A549 (cell line): ENCODE measurements at regions of chr13 and their contacts with region 1.

Region 1: DNA sequence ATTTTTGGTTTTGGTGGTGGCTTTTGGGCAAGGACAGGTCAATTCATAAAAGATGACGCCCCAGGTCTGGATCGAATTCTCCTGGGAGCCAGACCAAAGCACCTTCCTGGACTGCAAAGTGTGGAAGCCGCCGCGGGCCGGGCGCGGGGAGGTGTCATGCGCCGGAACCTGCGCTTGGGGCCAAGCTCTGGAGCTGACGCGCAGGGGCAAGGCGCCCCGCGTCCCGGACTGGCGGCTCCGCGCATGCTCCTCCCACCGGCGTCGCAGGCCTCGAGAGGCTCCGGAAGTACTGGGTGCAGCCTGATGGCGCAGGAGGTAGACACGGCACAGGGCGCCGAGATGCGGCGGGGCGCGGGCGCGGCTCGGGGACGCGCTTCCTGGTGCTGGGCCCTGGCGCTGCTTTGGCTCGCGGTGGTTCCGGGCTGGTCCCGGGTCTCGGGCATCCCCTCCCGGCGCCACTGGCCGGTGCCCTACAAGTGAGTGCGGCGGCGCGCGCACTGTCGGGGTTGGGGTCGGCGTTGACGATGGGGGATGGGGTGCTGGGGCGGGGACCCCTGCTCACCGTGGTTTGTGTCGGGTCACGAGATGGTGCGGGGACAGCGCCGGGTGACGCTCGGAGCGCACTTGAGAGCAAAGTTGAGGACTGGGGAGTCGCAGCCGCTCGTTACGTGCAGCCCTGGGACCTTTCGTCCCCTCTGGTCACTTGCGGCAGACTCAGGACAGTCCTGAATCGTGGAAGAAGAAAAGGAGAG is at the start of gene CLN5:
- DNase-seq: peak; percentile 76 to 90
- ATAC-seq: peak; percentile 99
- H3K4me3 ChIP-seq: peak within 1 kb of the TSS; percentile 83
- H3K27ac ChIP-seq: peak within 1 kb of the TSS; percentile 90 to 96
- H3K4me1 ChIP-seq: peaks cover 8% of the 10 kb centered on the region; the same call in 1 of the 3 replicates
- CTCF ChIP-seq: no peak
- EP300 ChIP-seq: no peak
- POLR2A ChIP-seq: peak; percentile 79
- RAD21 ChIP-seq: no peak
- polyA plus RNA-seq, gene CLN5: 20.0 and 21.1 TPM in 2 replicates

Region 2: DNA sequence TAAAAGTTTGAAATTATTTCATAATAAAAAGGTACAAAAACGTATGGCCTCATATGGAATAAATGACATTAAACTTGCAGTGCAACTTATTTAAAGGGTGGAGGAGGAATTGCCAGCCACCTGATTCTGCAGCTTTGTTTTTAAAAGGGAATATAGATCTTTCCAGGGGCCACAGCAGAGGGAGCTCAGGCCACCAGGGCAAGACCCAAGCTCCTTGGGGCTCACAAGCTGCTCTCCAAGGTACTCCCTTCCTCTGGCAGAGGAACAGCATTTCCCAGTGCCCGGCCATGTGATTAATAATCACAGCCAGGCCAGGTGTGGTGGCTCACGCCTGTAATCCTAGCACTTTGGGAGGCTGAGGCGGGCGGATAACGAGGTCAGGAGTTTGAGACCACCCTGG is 37.4 kb before region 1 on chr13:
- CTCF ChIA-PET with region 1: no interaction called
- POLR2A ChIA-PET with region 1: no interaction called
- DNase-seq: no peak
- ATAC-seq: no peak
- H3K4me3 ChIP-seq: no peak overlapping the region
- H3K27ac ChIP-seq: no peak overlapping the region
- H3K4me1 ChIP-seq: no peaks in the 10 kb centered on the region
- CTCF ChIP-seq: no peak
- EP300 ChIP-seq: no peak
- POLR2A ChIP-seq: no peak
- RAD21 ChIP-seq: no peak

Region 3: GRCh38 chr13:76980075-76980718 is 11.8 kb before region 1 on chr13:
- CTCF ChIA-PET with region 1: interaction called, 14 read pairs
- POLR2A ChIA-PET with region 1: no interaction called
- DNase-seq: peak; percentile 59 to 85
- ATAC-seq: peak; percentile 99 to 100
- H3K4me3 ChIP-seq: peak overlapping the region; percentile 47
- H3K27ac ChIP-seq: peak overlapping the region in 1 of 2 experiments; percentile 62; a peak in 3 of 6 replicates
- H3K4me1 ChIP-seq: no peaks in the 10 kb centered on the region
- CTCF ChIP-seq: peak; percentile 73
- EP300 ChIP-seq: no peak
- POLR2A ChIP-seq: no peak
- RAD21 ChIP-seq: peak; percentile 55 to 65

Region 4: DNA sequence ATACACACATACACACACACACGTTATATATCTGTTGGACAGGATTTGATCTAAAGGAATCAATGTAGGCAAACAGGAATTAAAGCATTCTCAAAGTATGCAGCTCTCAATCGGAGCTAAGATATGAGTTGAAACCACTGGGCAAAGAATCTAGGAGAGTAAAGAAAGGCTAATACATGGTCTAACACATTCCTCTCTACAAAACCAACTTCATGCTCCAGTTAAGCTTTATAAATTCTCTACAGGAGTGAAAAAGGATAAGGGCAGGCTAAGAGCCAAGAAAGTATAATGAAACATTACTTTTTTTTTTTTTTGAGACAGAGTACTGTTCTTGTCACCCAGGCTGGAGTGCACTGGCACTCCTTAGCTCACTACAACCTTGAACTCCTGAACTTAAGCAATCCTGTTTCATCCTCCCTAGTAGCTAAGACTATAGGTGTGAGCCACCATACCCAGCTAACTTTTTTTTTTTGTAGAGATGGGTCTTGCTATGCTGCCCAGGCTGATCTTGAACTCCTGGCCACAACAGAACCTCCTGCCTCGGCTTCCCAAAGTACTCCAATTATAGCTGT is 24.4 kb after region 1 on chr13:
- CTCF ChIA-PET with region 1: no interaction called
- POLR2A ChIA-PET with region 1: no interaction called
- DNase-seq: no peak
- ATAC-seq: no peak
- H3K4me3 ChIP-seq: no peak overlapping the region
- H3K27ac ChIP-seq: no peak overlapping the region
- H3K4me1 ChIP-seq: no peaks in the 10 kb centered on the region
- CTCF ChIP-seq: no peak
- EP300 ChIP-seq: no peak
- POLR2A ChIP-seq: no peak
- RAD21 ChIP-seq: no peak

Region 5: GRCh38 chr13:77026818-77027585 is 35.0 kb after region 1 on chr13 and contains the start of gene FBXL3:
- CTCF ChIA-PET with region 1: no interaction called
- POLR2A ChIA-PET with region 1: interaction called, 10 read pairs
- DNase-seq: peak; percentile 61 to 70
- ATAC-seq: peak; percentile 82 to 83
- H3K4me3 ChIP-seq: peak within 1 kb of the TSS; percentile 83
- H3K27ac ChIP-seq: peak within 1 kb of the TSS; percentile 95 to 100
- H3K4me1 ChIP-seq: peaks cover 29% of the 10 kb centered on the region
- CTCF ChIP-seq: no peak
- EP300 ChIP-seq: no peak
- POLR2A ChIP-seq: peak; percentile 46; the same call in 1 of the 2 replicates
- RAD21 ChIP-seq: no peak
- polyA plus RNA-seq, gene FBXL3: 24.0 and 24.3 TPM in 2 replicates